Natural killer cell (primary cell): ENCODE measurements at regions of chr14 and their contacts with region 1.

Region 1: DNA sequence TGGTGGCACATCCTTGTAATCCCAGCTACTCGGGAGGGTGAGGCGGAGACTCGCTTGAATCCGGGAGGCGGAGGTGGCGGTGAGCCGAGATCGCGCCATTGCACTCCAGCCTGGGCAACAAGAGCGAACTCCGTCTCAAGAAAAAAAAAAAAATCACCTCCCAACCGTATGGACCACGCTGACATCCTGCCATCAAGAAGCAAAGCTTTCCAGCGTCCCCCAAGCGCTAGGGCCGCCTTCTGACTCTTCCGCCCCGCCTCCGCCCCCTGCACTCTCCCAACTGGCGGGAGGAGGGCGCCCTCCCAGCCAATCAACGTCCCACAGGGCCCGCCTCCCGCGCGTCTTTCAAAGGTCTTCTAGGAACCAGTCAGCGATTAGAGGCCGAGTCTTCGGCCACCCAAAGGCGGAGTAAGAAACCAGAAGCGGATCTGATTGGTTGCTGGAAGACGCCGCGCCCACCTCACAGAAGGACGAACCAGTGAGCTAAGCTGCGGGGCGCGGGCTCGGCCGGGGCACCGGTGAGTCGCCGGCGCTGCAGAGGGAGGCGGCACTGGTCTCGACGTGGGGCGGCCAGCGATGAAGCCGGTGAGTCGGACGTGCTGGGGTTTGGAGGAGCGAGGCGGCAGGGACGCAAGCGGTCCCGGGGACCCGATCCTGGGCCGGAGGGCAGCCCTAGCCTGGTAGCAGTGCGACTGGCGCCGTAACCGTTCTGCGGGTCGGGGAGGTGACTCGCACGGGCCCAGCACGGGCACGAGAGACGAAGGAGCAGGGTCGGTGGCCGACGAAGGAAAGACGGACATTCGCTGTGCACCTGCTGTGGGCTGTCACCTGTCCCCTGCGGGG is at the start of gene CDKN3:
- DNase-seq: peak; percentile 97
- ATAC-seq: peak; percentile 93 to 98 (median 94)
- H3K4me3 ChIP-seq: peak within 1 kb of the TSS; percentile 81
- H3K4me3 Mint-ChIP-seq: peak within 1 kb of the TSS; percentile 92
- H3K27ac ChIP-seq: no peak within 1 kb of the TSS
- H3K27ac Mint-ChIP-seq: peak within 1 kb of the TSS; percentile 58 to 86
- H3K4me1 ChIP-seq: peaks cover 12% of the 10 kb centered on the region
- H3K4me1 Mint-ChIP-seq: peaks cover 7% of the 10 kb centered on the region in 2 donors
- H3K27me3 ChIP-seq: no peaks in the 10 kb centered on the region
- H3K27me3 Mint-ChIP-seq: peaks cover 0 to 3% of the 10 kb centered on the region in 2 donors
- CTCF ChIP-seq: peak; percentile 30
- total RNA-seq, gene CDKN3: 0.89 to 3.0 (median 1.8) TPM

Region 2: GRCh38 chr14:53946404-53947096 is 450.2 kb before region 1 on chr14:
- intact Hi-C with region 1: no loop called
- DNase-seq: no peak
- ATAC-seq: no peak
- H3K4me3 ChIP-seq: no peak overlapping the region
- H3K4me3 Mint-ChIP-seq: no peak overlapping the region
- H3K27ac ChIP-seq: no peak overlapping the region
- H3K27ac Mint-ChIP-seq: no peak overlapping the region
- H3K4me1 ChIP-seq: no peaks in the 10 kb centered on the region
- H3K4me1 Mint-ChIP-seq: no peaks in the 10 kb centered on the region
- H3K27me3 ChIP-seq: peaks cover 13% of the 10 kb centered on the region
- H3K27me3 Mint-ChIP-seq: peaks cover 21 to 47% of the 10 kb centered on the region in 2 donors
- CTCF ChIP-seq: no peak

Region 3: GRCh38 chr14:54440873-54441868 is 44.5 kb after region 1 on chr14 and contains the start of gene CNIH1:
- intact Hi-C with region 1: loop called (anchors 1 kb)
- DNase-seq: peak; percentile 95 to 97
- ATAC-seq: peak; percentile 91 to 96 (median 95)
- H3K4me3 ChIP-seq: peak within 1 kb of the TSS; percentile 63
- H3K4me3 Mint-ChIP-seq: peak within 1 kb of the TSS; percentile 96
- H3K27ac ChIP-seq: peak within 1 kb of the TSS; percentile 80
- H3K27ac Mint-ChIP-seq: peak within 1 kb of the TSS; percentile 92
- H3K4me1 ChIP-seq: peaks cover 7% of the 10 kb centered on the region
- H3K4me1 Mint-ChIP-seq: peaks cover 26 to 33% of the 10 kb centered on the region in 2 donors
- H3K27me3 ChIP-seq: no peaks in the 10 kb centered on the region
- H3K27me3 Mint-ChIP-seq: peaks cover 5 to 17% of the 10 kb centered on the region in 2 donors
- CTCF ChIP-seq: peak; percentile 91
- total RNA-seq, gene CNIH1: 20.4 to 30.9 (median 25.7) TPM